Dendritic cell treated with granulocyte-macrophage colony-stimulating factor and Interleukin-4, amounts not matched to agents 40 ng/mL and 50 ng/mL, for 4 days (primary cell): ENCODE measurements at regions of chr3 and their contacts with region 1.

Region 1: GRCh38 chr3:15427182-15427880 is at the starts of genes EAF1 and METTL6:
- H3K4me3 Mint-ChIP-seq: peak within 1 kb of the TSS; percentile 96
- H3K27ac Mint-ChIP-seq: peak within 1 kb of the TSS; percentile 91
- H3K4me1 Mint-ChIP-seq: peaks cover 50% of the 10 kb centered on the region
- H3K27me3 Mint-ChIP-seq: no peaks in the 10 kb centered on the region

Region 2: GRCh38 chr3:15557511-15557946 is 130.2 kb after region 1 on chr3:
- intact Hi-C with region 1: loop called (anchors 2 kb)
- H3K4me3 Mint-ChIP-seq: no peak overlapping the region
- H3K27ac Mint-ChIP-seq: no peak overlapping the region
- H3K4me1 Mint-ChIP-seq: peaks cover 21% of the 10 kb centered on the region
- H3K27me3 Mint-ChIP-seq: no peaks in the 10 kb centered on the region